ENCODE measurements at regions of chr11 and their contacts with region 1.

Region 1: DNA sequence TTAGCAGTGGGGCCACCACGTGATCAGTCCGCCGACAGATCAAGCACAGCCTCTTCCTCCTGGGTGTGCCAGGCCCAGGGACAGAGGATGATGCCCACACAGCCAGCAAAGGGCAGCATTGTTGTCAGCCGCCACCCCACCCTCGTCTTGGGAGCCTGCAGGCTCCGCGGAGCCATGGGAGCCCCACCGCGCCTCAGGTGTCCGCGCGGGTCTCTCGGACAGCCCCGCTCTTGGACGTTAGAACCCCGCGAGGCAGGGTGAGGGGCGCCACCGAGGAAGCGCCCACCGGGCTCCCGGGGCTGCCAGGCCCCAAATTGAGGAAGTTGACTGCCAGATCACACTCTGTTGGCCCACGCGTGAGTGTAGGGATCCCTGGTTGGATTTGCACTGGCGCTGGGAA is 83.9 kb upstream of the MS4A8 start:
- DNase-seq: no peak
- H3K4me3 Mint-ChIP-seq: no peak overlapping the region
- H3K27ac Mint-ChIP-seq: no peak overlapping the region
- H3K4me1 Mint-ChIP-seq: no peaks in the 10 kb centered on the region
- H3K27me3 Mint-ChIP-seq: peaks cover 9% of the 10 kb centered on the region

Region 2: DNA sequence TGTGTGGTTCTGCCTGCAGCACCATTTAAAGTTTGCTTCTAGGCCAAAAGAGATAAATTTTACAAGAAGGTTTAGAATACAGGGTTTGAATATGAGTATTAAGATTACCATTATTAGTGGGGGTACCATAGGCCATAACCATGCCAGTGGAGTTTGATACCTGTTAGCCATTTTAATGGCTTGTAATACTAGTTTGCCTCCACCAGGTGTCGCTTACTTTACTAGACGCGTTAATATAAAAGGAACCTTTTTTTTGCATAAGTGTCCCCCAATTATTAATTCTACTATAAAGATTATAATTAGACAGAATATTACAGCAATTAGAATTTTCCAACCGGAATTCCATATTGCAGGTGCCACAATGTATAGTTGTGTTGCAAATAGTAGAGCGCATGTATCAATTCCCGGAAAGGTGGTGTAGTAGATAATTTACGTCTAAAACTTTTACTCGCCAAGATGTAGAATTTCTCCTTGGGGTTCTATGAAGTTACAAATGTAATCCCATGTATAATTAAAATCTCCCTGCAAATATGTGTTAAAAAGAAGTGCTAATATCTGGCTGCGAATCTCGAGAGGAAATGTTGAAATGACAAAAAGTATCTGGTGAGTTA is 272.3 kb before region 1 on chr11:
- intact Hi-C with region 1: loop called (anchors 5 kb)
- DNase-seq: peak; percentile 65
- H3K4me3 Mint-ChIP-seq: no peak overlapping the region
- H3K27ac Mint-ChIP-seq: no peak overlapping the region
- H3K4me1 Mint-ChIP-seq: no peaks in the 10 kb centered on the region
- H3K27me3 Mint-ChIP-seq: peaks cover 6% of the 10 kb centered on the region

Region 3: DNA sequence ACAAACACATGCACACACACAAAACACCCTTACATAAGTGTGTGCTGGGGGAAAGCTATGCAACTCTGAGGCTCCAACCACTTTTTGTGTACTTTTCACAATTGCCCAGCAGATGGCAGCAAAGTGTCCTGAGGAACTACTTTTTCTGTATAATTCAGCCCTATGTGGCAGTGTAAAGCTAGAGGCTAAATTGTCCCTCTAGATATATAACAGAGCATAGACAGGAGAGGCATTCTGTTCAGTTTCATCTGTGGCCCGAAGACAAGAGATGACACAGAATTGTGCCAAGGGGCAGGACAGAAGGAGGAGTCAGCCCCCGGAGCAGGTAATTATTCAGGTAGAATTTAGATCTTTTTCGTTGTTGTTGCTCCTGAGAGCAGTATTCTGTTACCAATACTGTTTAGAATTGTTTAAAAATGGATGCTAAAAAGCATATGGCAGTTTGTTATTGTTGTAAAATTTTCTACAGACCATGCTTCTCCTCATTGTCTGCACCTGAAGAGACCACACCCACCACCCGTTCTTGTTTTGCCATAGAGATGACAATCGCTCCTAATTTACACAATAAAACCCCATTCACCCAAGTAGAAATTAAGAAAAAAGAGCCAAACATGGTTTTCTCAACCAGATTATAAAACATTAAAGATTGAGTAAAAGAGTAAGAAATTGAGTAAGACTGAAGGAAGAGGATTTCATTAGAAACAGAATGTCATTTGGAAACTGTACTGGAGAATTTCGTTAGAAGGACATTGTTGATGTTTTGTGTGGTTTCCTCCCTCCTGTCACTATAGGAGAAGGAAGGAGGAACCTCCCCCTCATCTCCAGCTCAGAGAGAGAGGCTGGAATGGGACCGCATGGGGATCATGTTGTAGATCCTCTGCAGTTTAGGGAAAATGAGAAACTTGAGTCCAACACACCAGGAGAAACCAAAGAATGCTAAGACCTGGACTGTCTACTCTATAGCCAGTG is 251.7 kb before region 1 on chr11:
- intact Hi-C with region 1: loop called (anchors 1 kb)
- DNase-seq: peak; percentile 88
- H3K4me3 Mint-ChIP-seq: no peak overlapping the region
- H3K27ac Mint-ChIP-seq: no peak overlapping the region
- H3K4me1 Mint-ChIP-seq: no peaks in the 10 kb centered on the region
- H3K27me3 Mint-ChIP-seq: peaks cover 8% of the 10 kb centered on the region

Measured in activated CD4-positive, alpha-beta T cell treated with anti-CD3 and anti-CD28 coated beads, Interleukin-2, amount 10 ng/mL, durations not matched to agents 24 days and 14 days (primary cell).